Transverse colon (tissue), 4 donors: ENCODE measurements at regions of chr1 and their contacts with region 1.

Region 1: DNA sequence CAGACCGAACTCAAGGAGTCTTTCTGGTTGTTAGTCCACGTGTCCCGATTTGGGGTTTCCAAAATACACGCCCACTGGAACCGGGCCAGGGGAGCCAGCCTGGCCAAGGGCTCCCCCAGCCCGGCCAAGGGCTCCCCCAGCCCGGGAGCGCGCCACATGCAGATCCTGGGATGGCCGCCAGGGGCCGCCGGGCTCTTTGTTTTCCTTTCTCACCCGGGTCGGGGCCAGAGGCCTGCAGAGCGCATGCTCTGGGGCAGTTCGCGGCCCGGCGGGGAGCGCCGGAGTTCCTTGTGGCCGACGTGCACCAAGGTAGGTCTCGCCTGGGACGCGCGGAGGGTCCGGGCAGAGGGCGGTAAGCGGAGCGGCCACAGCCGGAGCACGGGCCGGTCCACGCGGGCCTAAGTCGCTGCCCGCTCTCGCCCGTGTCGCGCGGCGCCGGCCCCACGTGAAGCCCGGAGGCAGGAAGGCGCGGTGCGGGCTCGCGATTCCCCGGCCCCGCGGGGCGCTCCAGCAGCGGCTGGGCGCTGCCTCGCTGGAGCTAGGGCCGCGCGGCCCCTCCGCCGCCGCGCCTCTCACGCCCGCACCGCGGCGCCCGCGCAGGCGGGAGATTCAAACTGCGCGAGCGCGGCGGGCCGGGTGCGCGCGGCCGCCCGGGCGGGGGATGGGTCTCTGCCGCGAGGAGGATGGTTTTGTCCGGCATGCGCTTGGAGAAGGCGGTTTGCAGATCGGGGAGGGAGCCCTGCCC is 12.3 kb downstream of the RCC1 start:
- DNase-seq: peak; percentile 91
- H3K4me3 ChIP-seq: peak overlapping the region; percentile 53 to 79 (median 70)
- H3K27ac ChIP-seq: peak overlapping the region; percentile 87 to 95 (median 94)
- H3K4me1 ChIP-seq: peaks cover 6 to 16% (median 11%) of the 10 kb centered on the region in 4 donors
- H3K27me3 ChIP-seq: no peaks in the 10 kb centered on the region
- CTCF ChIP-seq: peak; percentile 99 to 100 (median 99)
- EP300 ChIP-seq: no peak
- POLR2A ChIP-seq: peak; percentile 61

Region 2: GRCh38 chr1:28235755-28236655 is 282.2 kb before region 1 on chr1 and contains the start of gene ATP5IF1:
- in situ Hi-C with region 1: loop called in 1 of 4 experiments (anchors 25 kb)
- intact Hi-C with region 1: no loop called
- DNase-seq: peak; percentile 97
- H3K4me3 ChIP-seq: peak within 1 kb of the TSS; percentile 75 to 97 (median 86)
- H3K27ac ChIP-seq: peak within 1 kb of the TSS; percentile 91 to 98 (median 95)
- H3K4me1 ChIP-seq: peaks cover 18 to 44% (median 33%) of the 10 kb centered on the region in 4 donors
- H3K27me3 ChIP-seq: no peaks in the 10 kb centered on the region
- CTCF ChIP-seq: no peak
- EP300 ChIP-seq: no peak
- POLR2A ChIP-seq: peak; percentile 95
- total RNA-seq, gene ATP5IF1: 131 to 503 (median 344) TPM

Region 3: GRCh38 chr1:28458237-28459228 is 59.6 kb before region 1 on chr1:
- in situ Hi-C with region 1: no loop called
- intact Hi-C with region 1: no loop called
- DNase-seq: no peak
- H3K4me3 ChIP-seq: no peak overlapping the region
- H3K27ac ChIP-seq: no peak overlapping the region
- H3K4me1 ChIP-seq: peaks cover 0 to 11% (median 0%) of the 10 kb centered on the region in 4 donors
- H3K27me3 ChIP-seq: no peaks in the 10 kb centered on the region
- CTCF ChIP-seq: no peak
- EP300 ChIP-seq: no peak
- POLR2A ChIP-seq: no peak

Region 4: DNA sequence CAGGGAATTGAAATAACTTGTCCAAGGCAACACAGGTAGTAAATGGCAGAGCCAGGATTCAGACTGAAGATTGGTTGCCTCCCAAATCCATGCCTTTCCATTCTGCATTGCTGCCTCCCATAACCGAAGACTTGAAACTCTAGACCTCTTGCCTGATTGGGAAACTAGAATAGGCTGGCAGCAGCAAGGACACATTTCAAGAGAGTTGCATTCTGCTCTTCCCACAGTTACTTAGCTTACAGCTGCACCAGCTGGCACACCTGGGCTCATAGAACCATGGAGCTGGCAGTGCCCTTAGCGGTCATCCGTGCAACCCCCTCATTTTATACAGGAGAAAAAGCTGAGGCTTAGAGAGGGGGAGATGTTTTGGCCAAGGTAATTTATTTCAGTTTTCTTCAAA is 42.7 kb after region 1 on chr1:
- in situ Hi-C with region 1: no loop called
- intact Hi-C with region 1: loop called (anchors 1 kb)
- DNase-seq: no peak
- H3K4me3 ChIP-seq: no peak overlapping the region
- H3K27ac ChIP-seq: no peak overlapping the region
- H3K4me1 ChIP-seq: no peaks in the 10 kb centered on the region
- H3K27me3 ChIP-seq: no peaks in the 10 kb centered on the region
- CTCF ChIP-seq: no peak
- EP300 ChIP-seq: no peak
- POLR2A ChIP-seq: no peak

Region 5: DNA sequence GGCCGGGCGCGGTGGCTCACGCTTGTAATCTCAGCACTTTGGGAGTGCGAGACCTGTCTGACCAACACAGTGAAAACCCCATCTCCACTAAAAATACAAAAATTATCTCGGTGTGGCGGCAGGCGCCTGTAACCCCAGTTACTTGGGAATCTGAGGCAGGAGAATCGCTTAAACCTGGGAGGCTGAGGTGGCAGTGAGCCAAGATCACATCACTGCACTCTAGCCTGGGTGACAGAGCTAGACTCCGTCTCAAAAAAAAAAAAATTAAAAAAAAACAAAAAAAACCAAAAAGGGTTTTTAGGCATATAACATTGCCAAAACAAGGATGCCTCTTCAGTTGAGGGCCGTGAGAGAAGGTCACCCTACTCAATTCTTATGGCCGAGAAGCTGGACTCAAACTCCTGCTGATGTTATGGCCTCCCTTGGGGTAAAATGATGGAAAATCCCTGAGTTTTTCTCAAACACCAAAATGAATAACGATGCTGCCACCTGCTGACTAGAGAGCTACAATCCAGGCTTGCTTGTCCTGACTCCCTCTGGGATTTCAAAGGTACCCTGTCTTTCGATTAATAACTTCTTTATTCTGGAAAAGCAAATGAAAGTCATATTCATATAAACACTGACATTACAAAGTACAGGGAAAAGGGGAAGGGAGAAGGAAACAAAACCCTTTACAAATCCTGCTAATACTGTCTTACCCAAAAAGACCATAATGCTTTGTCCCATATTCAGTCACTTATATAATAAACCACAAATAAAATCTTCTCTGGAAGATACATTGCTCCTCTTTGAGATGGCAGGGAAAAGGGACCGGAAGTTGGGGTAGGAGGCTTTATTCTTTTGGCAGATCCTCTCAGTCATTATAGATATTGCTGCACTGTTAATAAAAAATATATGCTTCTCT is 84.6 kb after region 1 on chr1:
- in situ Hi-C with region 1: loop called in 3 of 4 experiments (anchors 5 to 25 kb)
- intact Hi-C with region 1: loop called (anchors 10 kb)
- DNase-seq: peak; percentile 55
- H3K4me3 ChIP-seq: no peak overlapping the region
- H3K27ac ChIP-seq: no peak overlapping the region
- H3K4me1 ChIP-seq: peaks cover 0 to 3% (median 0%) of the 10 kb centered on the region in 4 donors
- H3K27me3 ChIP-seq: no peaks in the 10 kb centered on the region
- CTCF ChIP-seq: peak; percentile 55 to 68 (median 57)
- EP300 ChIP-seq: no peak
- POLR2A ChIP-seq: no peak

Region 6: GRCh38 chr1:28914228-28915030 is 396.3 kb after region 1 on chr1 and contains the start of gene EPB41:
- in situ Hi-C with region 1: no loop called
- intact Hi-C with region 1: no loop called
- DNase-seq: peak; percentile 93
- H3K4me3 ChIP-seq: peak within 1 kb of the TSS; percentile 61 to 93 (median 84)
- H3K27ac ChIP-seq: peak within 1 kb of the TSS; percentile 72 to 85 (median 78)
- H3K4me1 ChIP-seq: peaks cover 0 to 17% (median 11%) of the 10 kb centered on the region in 4 donors
- H3K27me3 ChIP-seq: no peaks in the 10 kb centered on the region
- CTCF ChIP-seq: no peak
- EP300 ChIP-seq: no peak
- POLR2A ChIP-seq: no peak
- total RNA-seq, gene EPB41: 71.6 to 117 (median 92.6) TPM